H1 (cell line): ENCODE measurements at regions of chr15 and their contacts with region 1.

Region 1: GRCh38 chr15:84633311-84634227 is 20.5 kb downstream of the WDR73 start:
- DNase-seq: peak in 1 of 2 experiments; percentile 81
- H3K4me3 ChIP-seq: peak overlapping the region; percentile 43 to 71 (median 59)
- H3K27ac ChIP-seq: no peak overlapping the region
- H3K4me1 ChIP-seq: peaks cover 0 to 6% (median 4%) of the 10 kb centered on the region in 4 experiments; a peak in 6 of 7 replicates
- H3K27me3 ChIP-seq: peaks cover 0 to 21% (median 2%) of the 10 kb centered on the region in 4 experiments; a peak in 5 of 7 replicates
- CTCF ChIP-seq: no peak
- EP300 ChIP-seq: no peak
- POLR2A ChIP-seq: no peak
- RAD21 ChIP-seq: no peak

Region 2: DNA sequence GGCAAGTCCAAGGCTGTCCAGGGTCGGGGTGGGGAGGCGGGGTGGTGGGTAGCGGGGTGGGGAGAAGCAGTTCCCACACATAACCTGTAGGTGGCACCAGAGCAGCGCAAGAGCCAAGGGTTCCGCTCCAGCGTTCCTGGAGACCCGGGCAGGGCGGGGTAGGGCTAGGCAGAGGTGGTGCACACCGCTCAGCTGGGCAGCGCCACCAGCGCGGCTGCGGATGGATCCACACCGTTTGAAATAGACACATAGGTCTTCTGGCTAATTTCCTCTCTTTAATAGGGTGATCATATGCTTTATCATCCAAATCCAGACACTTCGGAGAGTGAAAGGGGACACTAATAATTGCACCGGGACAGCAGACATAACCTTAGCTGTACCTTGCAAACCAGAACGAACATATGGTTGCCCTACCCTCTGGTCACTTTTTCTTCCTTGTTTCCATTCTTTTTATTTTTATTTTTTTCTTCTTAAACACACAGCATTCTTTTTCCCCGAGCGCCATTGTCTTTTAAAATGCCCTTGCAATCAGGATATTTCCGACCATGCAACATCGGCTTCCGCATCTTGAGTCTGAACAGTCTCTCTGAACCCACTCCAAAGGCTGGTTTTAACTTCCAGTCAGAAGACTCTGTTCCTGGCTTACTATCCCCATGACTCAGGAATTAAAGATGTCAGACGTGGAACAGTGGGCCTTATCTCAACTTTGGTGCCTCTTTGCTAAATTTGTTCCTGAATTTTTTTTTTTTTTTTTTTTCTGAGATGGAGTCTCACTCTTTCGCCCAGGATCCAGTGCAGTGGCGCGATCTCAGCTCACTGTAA is 45.3 kb before region 1 on chr15:
- CTCF ChIA-PET with region 1: interaction called, 32 read pairs
- POLR2A ChIA-PET with region 1: interaction called, 6 read pairs
- DNase-seq: peak; percentile 70 to 94
- H3K4me3 ChIP-seq: peak overlapping the region in 2 of 4 experiments; percentile 10 to 46; a peak in 4 of 8 replicates
- H3K27ac ChIP-seq: no peak overlapping the region
- H3K4me1 ChIP-seq: peaks cover 0 to 11% (median 0%) of the 10 kb centered on the region in 4 experiments; a peak in 2 of 7 replicates
- H3K27me3 ChIP-seq: no peaks in the 10 kb centered on the region
- CTCF ChIP-seq: peak; percentile 67 to 87 (median 82)
- EP300 ChIP-seq: no peak
- POLR2A ChIP-seq: no peak
- RAD21 ChIP-seq: peak; percentile 86 to 87

Region 3: DNA sequence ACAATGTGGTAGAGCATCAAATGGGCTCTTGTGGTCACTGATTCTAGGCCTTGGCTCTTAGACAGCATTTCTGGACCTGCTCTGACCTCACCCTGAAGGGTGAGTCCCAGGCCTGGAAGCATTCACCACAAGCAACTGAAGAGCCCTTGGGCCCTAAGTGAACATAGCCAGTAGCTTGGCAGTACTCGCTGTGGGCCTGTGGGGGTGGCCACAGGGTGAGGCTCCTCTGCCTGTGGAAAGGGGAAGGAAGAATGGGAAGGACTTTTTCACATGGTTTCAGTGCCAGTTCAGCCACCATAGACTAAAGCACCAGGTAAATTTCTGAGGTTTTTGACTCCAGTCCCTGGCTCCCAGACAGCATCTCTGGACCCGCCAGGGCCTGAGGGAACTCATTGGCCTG is 37.9 kb before region 1 on chr15:
- CTCF ChIA-PET with region 1: interaction called, 61 read pairs
- POLR2A ChIA-PET with region 1: interaction called, 134 read pairs
- DNase-seq: no peak
- H3K4me3 ChIP-seq: no peak overlapping the region
- H3K27ac ChIP-seq: no peak overlapping the region
- H3K4me1 ChIP-seq: peaks cover 0 to 10% (median 2%) of the 10 kb centered on the region in 4 experiments; a peak in 4 of 7 replicates
- H3K27me3 ChIP-seq: peaks cover 0 to 3% (median 0%) of the 10 kb centered on the region in 4 experiments; a peak in 1 of 7 replicates
- CTCF ChIP-seq: no peak
- EP300 ChIP-seq: no peak
- POLR2A ChIP-seq: no peak
- RAD21 ChIP-seq: no peak

Region 4: GRCh38 chr15:84600851-84601838 is 32.4 kb before region 1 on chr15 and contains the start of gene ZSCAN2:
- CTCF ChIA-PET with region 1: interaction called, 61 read pairs
- POLR2A ChIA-PET with region 1: interaction called, 134 read pairs
- DNase-seq: peak; percentile 89 to 98
- H3K4me3 ChIP-seq: peak within 1 kb of the TSS; percentile 56 to 90 (median 86)
- H3K27ac ChIP-seq: peak within 1 kb of the TSS; percentile 67; the same call in 1 of the 2 replicates
- H3K4me1 ChIP-seq: peaks cover 7 to 24% (median 15%) of the 10 kb centered on the region in 4 experiments
- H3K27me3 ChIP-seq: peaks cover 0 to 3% (median 0%) of the 10 kb centered on the region in 4 experiments; a peak in 4 of 7 replicates
- CTCF ChIP-seq: no peak
- EP300 ChIP-seq: no peak; a peak in 1 of 3 replicates
- POLR2A ChIP-seq: peak in 1 of 2 experiments; percentile 70; a peak in 2 of 3 replicates
- RAD21 ChIP-seq: no peak
- total RNA-seq, gene ZSCAN2: 37.3 and 52.4 TPM in 2 replicates

Region 5: GRCh38 chr15:84616235-84616634 is 17.3 kb before region 1 on chr15:
- CTCF ChIA-PET with region 1: interaction called, 8 read pairs
- POLR2A ChIA-PET with region 1: interaction called, 33 read pairs
- DNase-seq: no peak
- H3K4me3 ChIP-seq: no peak overlapping the region
- H3K27ac ChIP-seq: no peak overlapping the region
- H3K4me1 ChIP-seq: peaks cover 0 to 2% (median 0%) of the 10 kb centered on the region in 4 experiments; a peak in 1 of 7 replicates
- H3K27me3 ChIP-seq: no peaks in the 10 kb centered on the region
- CTCF ChIP-seq: no peak
- EP300 ChIP-seq: no peak
- POLR2A ChIP-seq: no peak
- RAD21 ChIP-seq: no peak

Region 6: GRCh38 chr15:84621358-84621979 is 12.1 kb before region 1 on chr15:
- CTCF ChIA-PET with region 1: interaction called, 11 read pairs
- POLR2A ChIA-PET with region 1: interaction called, 11 read pairs
- DNase-seq: no peak
- H3K4me3 ChIP-seq: peak overlapping the region in 1 of 4 experiments; percentile 2; a peak in 2 of 8 replicates
- H3K27ac ChIP-seq: no peak overlapping the region
- H3K4me1 ChIP-seq: no peaks in the 10 kb centered on the region
- H3K27me3 ChIP-seq: no peaks in the 10 kb centered on the region; a peak in 1 of 7 replicates
- CTCF ChIP-seq: no peak
- EP300 ChIP-seq: no peak
- POLR2A ChIP-seq: no peak
- RAD21 ChIP-seq: no peak

Region 7: DNA sequence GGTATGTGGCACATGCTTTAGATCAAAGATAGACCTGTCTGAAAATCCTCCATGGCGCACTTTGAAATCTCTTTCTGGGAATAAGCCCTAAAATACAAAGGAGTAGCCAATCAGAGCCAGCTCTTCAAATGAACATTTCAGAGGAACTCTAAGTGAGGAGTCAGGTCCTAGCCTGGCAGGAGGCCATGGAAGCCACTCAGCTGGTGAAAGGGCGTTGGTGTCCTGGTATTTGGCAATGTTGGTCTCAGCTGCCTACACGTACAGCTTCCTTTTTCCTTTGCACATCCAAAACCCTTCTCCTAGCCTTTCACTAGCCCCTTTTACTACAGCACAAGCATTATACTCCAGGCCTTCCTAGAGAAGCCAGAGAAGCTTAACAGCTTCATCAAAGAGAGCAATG is 15.0 kb after region 1 on chr15:
- CTCF ChIA-PET with region 1: interaction called, 57 read pairs
- POLR2A ChIA-PET with region 1: interaction called, 32 read pairs
- DNase-seq: no peak
- H3K4me3 ChIP-seq: no peak overlapping the region
- H3K27ac ChIP-seq: no peak overlapping the region
- H3K4me1 ChIP-seq: peaks cover 0 to 6% (median under 1%) of the 10 kb centered on the region in 4 experiments; a peak in 3 of 7 replicates
- H3K27me3 ChIP-seq: no peaks in the 10 kb centered on the region
- CTCF ChIP-seq: no peak
- EP300 ChIP-seq: no peak
- POLR2A ChIP-seq: no peak
- RAD21 ChIP-seq: no peak

Region 8: GRCh38 chr15:84727429-84727828 is 93.9 kb after region 1 on chr15:
- CTCF ChIA-PET with region 1: no interaction called
- POLR2A ChIA-PET with region 1: no interaction called
- DNase-seq: no peak
- H3K4me3 ChIP-seq: no peak overlapping the region
- H3K27ac ChIP-seq: no peak overlapping the region
- H3K4me1 ChIP-seq: no peaks in the 10 kb centered on the region
- H3K27me3 ChIP-seq: no peaks in the 10 kb centered on the region
- CTCF ChIP-seq: no peak
- EP300 ChIP-seq: no peak
- POLR2A ChIP-seq: no peak
- RAD21 ChIP-seq: no peak